ENCODE measurements at regions of chr10 and their contacts with region 1.

Region 1: DNA sequence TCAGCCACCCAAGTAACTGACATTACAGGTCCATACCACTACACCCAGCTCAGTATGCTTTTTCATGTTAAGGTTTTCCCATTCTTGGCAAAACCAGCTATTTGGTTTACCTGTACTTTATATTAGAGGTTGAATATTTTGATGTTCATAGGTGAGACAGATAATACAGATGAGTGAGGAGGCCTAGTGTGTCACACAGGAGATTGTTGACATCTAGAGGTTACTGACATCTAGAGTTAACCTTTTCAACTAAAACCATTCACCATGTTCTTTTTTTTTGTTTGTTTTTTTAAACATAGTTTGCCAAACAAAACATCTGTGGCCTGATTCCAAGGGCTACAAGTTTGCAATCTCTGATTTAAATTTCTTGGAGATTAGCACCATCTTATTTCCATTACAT is 8.0 kb downstream of the GHITM start:
- H3K4me3 ChIP-seq: no peak overlapping the region
- H3K27ac ChIP-seq: no peak overlapping the region
- H3K4me1 ChIP-seq: peaks cover 3% of the 10 kb centered on the region; the same call in 1 of the 2 replicates
- CTCF ChIP-seq: no peak

Region 2: GRCh38 chr10:84205049-84205852 is 57.9 kb after region 1 on chr10:
- CTCF ChIA-PET with region 1: interaction called, 55 read pairs
- POLR2A ChIA-PET with region 1: no interaction called
- H3K4me3 ChIP-seq: no peak overlapping the region
- H3K27ac ChIP-seq: no peak overlapping the region
- H3K4me1 ChIP-seq: no peaks in the 10 kb centered on the region
- CTCF ChIP-seq: peak; percentile 68

Measured in HEK293 (cell line).